Naive thymus-derived CD4-positive, alpha-beta T cell (primary cell): ENCODE measurements at regions of chr12 and their contacts with region 1.

Region 1: DNA sequence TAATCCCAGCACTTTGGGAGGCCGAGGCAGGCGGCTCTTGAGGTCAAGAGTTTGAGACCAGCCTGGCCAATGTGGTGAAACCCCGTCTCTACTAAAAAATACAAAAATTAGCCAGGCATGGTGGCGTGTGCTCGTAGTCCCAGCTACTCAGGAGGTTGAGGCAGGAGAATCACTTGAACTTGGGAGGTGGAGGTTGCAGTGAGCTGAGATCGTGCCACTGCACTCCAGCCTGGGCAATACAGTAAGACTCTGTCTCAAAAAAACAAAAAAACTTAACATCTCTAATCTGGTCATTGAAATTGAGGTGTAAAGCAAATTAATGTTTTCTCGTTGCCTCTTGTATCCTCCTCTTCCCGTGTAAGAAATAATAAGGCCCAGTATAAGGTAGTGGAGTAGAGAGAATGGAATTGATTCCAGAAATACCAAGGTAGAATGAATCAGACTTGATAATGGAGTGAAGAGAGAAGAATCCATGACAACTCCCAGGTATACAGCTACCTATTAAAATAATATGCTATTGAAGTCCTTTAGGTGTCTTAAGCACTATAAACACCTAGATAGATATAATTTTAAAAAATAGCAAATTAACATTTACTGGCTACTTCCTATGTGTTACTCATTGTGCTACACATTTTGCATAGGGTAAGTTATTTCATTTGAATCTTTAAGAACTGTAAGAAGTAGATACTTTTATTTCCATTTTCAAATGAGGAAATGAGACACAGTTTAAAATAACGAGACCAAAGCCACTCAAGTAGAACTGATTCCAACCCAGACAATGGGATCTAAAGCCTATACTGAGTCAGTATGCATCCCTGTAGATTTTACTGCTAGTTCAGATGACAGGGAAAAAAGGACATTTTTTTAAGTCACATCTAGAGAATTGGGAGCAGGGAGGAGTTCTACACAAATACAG is 23.2 kb downstream of the RAP1B start:
- DNase-seq: no peak
- ATAC-seq: no peak
- H3K4me3 ChIP-seq: no peak overlapping the region
- H3K4me3 Mint-ChIP-seq: peak overlapping the region in 9 of 10 donors; percentile 26 to 80 (median 53)
- H3K27ac ChIP-seq: peak overlapping the region; percentile 43
- H3K27ac Mint-ChIP-seq: peak overlapping the region in 8 of 9 donors; percentile 10 to 94 (median 72)
- H3K4me1 ChIP-seq: peaks cover 67 to 77% of the 10 kb centered on the region in 2 donors
- H3K4me1 Mint-ChIP-seq: peaks cover 55 to 96% (median 87%) of the 10 kb centered on the region in 7 donors
- H3K27me3 ChIP-seq: no peaks in the 10 kb centered on the region
- H3K27me3 Mint-ChIP-seq: no peaks in the 10 kb centered on the region

Region 2: DNA sequence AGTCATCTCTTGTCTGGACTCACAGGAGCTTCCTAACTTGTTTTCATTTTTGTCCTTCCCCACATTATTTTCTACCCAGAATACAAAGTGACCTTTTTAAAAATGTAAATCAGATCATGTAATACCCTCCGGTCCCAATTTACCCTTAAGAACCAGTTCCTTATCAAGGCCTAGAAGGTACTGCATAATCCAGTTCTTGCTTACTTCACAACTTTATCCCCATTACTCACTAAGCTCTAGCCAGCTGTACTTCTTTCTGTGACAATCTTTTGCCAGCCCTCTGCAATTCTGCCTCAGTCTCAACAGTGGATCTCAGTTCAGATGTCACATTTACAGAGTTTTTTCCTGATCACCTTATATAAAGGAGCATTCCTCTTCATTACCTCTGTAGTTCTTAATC is 11.6 kb before region 1 on chr12:
- CTCF ChIA-PET with region 1: no interaction called
- POLR2A ChIA-PET with region 1: no interaction called
- intact Hi-C with region 1: loop called in 1 of 2 experiments (anchors 2 kb)
- DNase-seq: no peak
- ATAC-seq: peak; percentile 31
- H3K4me3 ChIP-seq: peak overlapping the region; percentile 1
- H3K4me3 Mint-ChIP-seq: peak overlapping the region; percentile 4 to 98 (median 66)
- H3K27ac ChIP-seq: peak overlapping the region; percentile 26
- H3K27ac Mint-ChIP-seq: peak overlapping the region; percentile 25 to 90 (median 60)
- H3K4me1 ChIP-seq: peaks cover 46 to 60% of the 10 kb centered on the region in 2 donors
- H3K4me1 Mint-ChIP-seq: peaks cover 67 to 99% (median 88%) of the 10 kb centered on the region in 7 donors
- H3K27me3 ChIP-seq: no peaks in the 10 kb centered on the region
- H3K27me3 Mint-ChIP-seq: no peaks in the 10 kb centered on the region

Region 3: DNA sequence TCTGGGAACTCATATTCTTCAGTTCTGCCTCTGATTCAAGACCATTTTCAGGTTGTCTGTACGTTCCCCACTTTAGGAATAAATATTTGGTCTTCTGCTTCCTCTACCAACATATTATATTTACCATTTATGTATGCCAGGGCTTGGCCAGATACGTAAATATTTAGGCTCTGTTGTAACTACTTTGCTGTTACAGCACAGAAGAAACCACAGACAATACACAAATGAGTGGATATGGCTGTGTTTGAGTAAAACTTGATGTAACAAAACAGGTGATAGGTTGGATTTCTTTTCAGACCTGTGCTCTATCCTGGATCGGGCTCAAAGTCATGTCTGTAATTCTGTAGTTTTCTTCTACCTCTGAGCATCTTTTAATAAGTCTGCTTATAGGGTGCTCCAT is 14.3 kb after region 1 on chr12:
- CTCF ChIA-PET with region 1: no interaction called
- POLR2A ChIA-PET with region 1: interaction called, 3 read pairs
- intact Hi-C with region 1: loop called (anchors 1 to 2 kb)
- DNase-seq: no peak
- ATAC-seq: peak; percentile 54
- H3K4me3 ChIP-seq: no peak overlapping the region
- H3K4me3 Mint-ChIP-seq: peak overlapping the region in 6 of 10 donors; percentile 25 to 51 (median 36)
- H3K27ac ChIP-seq: peak overlapping the region; percentile 45
- H3K27ac Mint-ChIP-seq: peak overlapping the region; percentile 34 to 88 (median 67)
- H3K4me1 ChIP-seq: peaks cover 17 to 18% of the 10 kb centered on the region in 2 donors
- H3K4me1 Mint-ChIP-seq: peaks cover 33 to 77% (median 60%) of the 10 kb centered on the region in 7 donors
- H3K27me3 ChIP-seq: no peaks in the 10 kb centered on the region
- H3K27me3 Mint-ChIP-seq: no peaks in the 10 kb centered on the region

Region 4: DNA sequence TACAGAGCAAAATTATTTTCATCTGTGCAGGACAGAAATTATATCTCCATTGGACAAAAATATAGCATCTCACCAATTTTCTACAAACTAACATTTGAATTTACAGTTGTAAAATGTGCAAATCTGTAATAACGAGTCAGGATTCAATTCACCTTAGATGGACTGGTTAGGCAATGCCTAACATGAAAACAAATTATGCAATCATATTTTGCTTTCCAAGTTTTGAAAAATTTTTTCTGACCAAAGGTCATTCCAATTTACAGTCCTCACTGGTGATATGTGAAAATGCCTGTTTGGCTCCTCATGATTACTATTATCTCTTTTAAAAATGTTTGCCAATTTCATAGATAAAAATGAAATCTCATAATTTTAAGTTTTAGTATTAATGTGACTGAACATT is 305.6 kb after region 1 on chr12:
- CTCF ChIA-PET with region 1: no interaction called
- POLR2A ChIA-PET with region 1: no interaction called
- intact Hi-C with region 1: no loop called
- DNase-seq: no peak
- ATAC-seq: no peak
- H3K4me3 ChIP-seq: no peak overlapping the region
- H3K4me3 Mint-ChIP-seq: no peak overlapping the region
- H3K27ac ChIP-seq: no peak overlapping the region
- H3K27ac Mint-ChIP-seq: no peak overlapping the region
- H3K4me1 ChIP-seq: no peaks in the 10 kb centered on the region
- H3K4me1 Mint-ChIP-seq: no peaks in the 10 kb centered on the region
- H3K27me3 ChIP-seq: no peaks in the 10 kb centered on the region
- H3K27me3 Mint-ChIP-seq: peaks cover 0 to 18% (median 9%) of the 10 kb centered on the region in 5 donors

Region 5: GRCh38 chr12:69039894-69040293 is 406.0 kb after region 1 on chr12:
- CTCF ChIA-PET with region 1: no interaction called
- POLR2A ChIA-PET with region 1: no interaction called
- intact Hi-C with region 1: no loop called
- DNase-seq: no peak
- ATAC-seq: peak; percentile 85
- H3K4me3 ChIP-seq: no peak overlapping the region
- H3K4me3 Mint-ChIP-seq: no peak overlapping the region
- H3K27ac ChIP-seq: no peak overlapping the region
- H3K27ac Mint-ChIP-seq: no peak overlapping the region
- H3K4me1 ChIP-seq: no peaks in the 10 kb centered on the region
- H3K4me1 Mint-ChIP-seq: no peaks in the 10 kb centered on the region
- H3K27me3 ChIP-seq: no peaks in the 10 kb centered on the region
- H3K27me3 Mint-ChIP-seq: peaks cover 0 to 4% (median 0%) of the 10 kb centered on the region in 5 donors